ENCODE measurements at regions of chr4 and their contacts with region 1.

Region 1: DNA sequence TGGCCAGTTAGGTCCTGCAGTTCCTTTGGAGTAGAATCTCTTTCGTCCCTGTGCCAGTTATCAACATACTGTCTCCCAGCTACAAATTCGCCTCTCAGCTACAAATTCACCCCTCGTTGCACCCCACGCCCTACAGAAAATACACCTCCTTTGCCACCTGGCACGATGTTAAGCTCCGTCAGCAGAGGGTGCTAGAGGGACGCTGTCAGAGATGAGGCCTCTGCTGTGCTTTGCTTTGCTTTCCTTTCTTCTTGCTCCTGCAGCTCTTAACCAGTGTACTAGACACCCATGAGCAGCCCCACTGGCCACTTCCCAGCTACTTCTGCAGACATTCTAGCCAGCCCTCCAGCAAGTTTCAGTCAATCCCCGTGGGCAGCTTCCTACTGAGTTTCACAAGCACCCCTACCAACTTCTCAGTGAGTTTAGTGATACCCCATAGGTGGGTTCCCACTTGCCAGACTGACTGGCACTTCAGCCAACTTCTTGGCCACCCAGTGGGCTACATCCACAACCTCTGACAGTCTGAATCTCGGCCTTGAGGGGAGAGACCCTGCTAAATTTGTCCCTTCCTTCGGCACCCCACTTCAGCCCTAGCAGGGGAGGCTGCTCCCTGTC is 21.8 kb downstream of the HAUS3 start:
- DNase-seq: peak; percentile 54 to 89 (median 76)
- ATAC-seq: peak; percentile 88 to 97 (median 90)
- H3K4me3 ChIP-seq: no peak overlapping the region
- H3K4me3 Mint-ChIP-seq: no peak overlapping the region
- H3K27ac ChIP-seq: no peak overlapping the region
- H3K27ac Mint-ChIP-seq: no peak overlapping the region
- H3K4me1 ChIP-seq: peaks cover 0 to 9% of the 10 kb centered on the region in 2 experiments
- H3K4me1 Mint-ChIP-seq: peaks cover 6% of the 10 kb centered on the region in 3 donors
- H3K27me3 ChIP-seq: no peaks in the 10 kb centered on the region
- H3K27me3 Mint-ChIP-seq: no peaks in the 10 kb centered on the region

Region 2: DNA sequence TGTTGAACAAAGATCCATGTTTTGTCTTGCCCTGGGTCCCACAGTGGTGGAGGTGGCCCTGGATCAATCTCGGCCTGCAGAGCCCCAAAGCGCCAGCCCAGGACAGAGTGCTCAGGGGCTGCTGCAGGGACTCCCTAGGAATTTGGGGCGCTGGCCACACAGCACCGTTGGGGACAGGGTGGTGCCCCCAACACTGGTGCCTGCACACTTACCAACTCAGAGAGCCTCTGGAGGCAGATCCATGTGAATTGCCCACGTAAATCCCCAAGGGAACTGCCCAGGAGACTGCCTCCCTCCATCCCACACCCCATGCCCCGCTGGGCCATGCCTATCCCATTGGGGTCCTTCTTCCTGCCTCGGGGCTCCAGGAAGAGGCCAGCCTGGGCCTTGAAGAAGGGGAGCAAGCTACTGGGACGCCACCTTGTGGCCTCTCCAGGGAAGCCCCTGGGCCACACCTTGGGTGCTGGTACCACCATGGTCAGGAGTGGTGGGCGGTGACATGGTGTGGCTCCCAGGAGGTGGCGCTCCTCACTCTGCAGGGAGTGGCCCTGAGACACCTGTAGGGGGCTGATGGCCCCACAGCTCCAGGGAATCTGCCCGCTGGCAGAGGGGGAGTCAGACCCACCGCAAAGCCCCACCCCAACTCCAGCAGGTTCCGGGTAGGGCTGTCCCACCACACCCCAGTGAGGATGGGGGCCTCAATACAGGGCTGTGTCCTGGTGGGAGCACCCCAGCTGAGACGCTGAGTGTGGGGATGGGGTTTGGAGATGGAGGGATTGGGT is 221.5 kb after region 1 on chr4:
- CTCF ChIA-PET with region 1: interaction called in 1 of 2 experiments, 11 read pairs
- POLR2A ChIA-PET with region 1: no interaction called
- DNase-seq: peak; percentile 40 to 81 (median 64)
- ATAC-seq: peak; percentile 85 to 98 (median 88)
- H3K4me3 ChIP-seq: no peak overlapping the region
- H3K4me3 Mint-ChIP-seq: no peak overlapping the region
- H3K27ac ChIP-seq: no peak overlapping the region
- H3K27ac Mint-ChIP-seq: no peak overlapping the region
- H3K4me1 ChIP-seq: peaks cover 0 to 9% of the 10 kb centered on the region in 2 experiments
- H3K4me1 Mint-ChIP-seq: peaks cover 0 to 7% (median 3%) of the 10 kb centered on the region in 3 donors
- H3K27me3 ChIP-seq: no peaks in the 10 kb centered on the region
- H3K27me3 Mint-ChIP-seq: no peaks in the 10 kb centered on the region

Region 3: GRCh38 chr4:2462218-2462991 is 242.3 kb after region 1 on chr4:
- CTCF ChIA-PET with region 1: interaction called in 1 of 2 experiments, 12 read pairs
- POLR2A ChIA-PET with region 1: no interaction called
- DNase-seq: peak; percentile 16 to 85 (median 57)
- ATAC-seq: peak; percentile 97 to 98 (median 98)
- H3K4me3 ChIP-seq: peak overlapping the region; percentile 10 to 17
- H3K4me3 Mint-ChIP-seq: peak overlapping the region; percentile 65 to 79 (median 78)
- H3K27ac ChIP-seq: no peak overlapping the region
- H3K27ac Mint-ChIP-seq: no peak overlapping the region
- H3K4me1 ChIP-seq: peaks cover 2 to 19% of the 10 kb centered on the region in 2 experiments
- H3K4me1 Mint-ChIP-seq: peaks cover 9 to 18% (median 18%) of the 10 kb centered on the region in 3 donors
- H3K27me3 ChIP-seq: peaks cover 2 to 33% of the 10 kb centered on the region in 2 experiments
- H3K27me3 Mint-ChIP-seq: no peaks in the 10 kb centered on the region